Activated naive CD8-positive, alpha-beta T cell treated with anti-CD3 and anti-CD28 coated beads, Interleukin-2, amount 10 ng/mL, durations not matched to agents 7 days and 5 days (primary cell): ENCODE measurements at regions of chr6 and their contacts with region 1.

Region 1: DNA sequence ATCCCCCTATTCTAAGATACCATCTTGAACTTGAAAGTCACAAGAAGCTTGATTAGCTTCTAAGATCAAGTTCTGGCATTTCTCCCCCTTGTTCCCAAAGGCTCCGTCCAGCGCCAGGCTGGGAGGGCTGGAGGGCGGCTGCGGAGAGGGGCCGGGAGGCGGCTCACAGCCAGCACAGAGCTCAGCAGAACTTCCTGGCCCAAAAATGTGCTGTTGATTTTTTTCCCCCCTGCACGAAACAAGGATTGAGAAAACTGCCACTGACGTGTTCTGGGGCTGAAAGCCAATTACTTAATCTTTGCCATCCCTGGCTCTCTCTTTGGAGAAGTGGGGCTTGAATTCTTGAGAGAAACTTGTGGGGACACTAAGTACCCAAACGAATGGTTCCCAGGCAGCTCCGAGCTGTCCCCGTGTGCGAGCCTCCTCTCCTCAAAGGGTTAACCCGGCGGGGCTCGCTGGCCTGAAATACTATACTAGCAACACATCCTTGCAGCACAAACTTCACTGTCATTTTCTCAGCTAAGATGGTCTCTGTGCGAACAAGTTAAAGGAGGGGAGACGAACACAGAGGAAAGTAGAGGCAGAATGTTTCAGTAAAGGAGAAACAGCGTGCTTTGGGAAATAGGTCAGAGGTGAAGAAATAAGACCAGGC is 452 bp downstream of the TRAF3IP2 start:
- DNase-seq: peak; percentile 37
- ATAC-seq: peak; percentile 53
- H3K4me3 Mint-ChIP-seq: peak overlapping the region; percentile 88
- H3K27ac Mint-ChIP-seq: peak overlapping the region; percentile 91
- H3K4me1 Mint-ChIP-seq: peaks cover 27% of the 10 kb centered on the region
- H3K27me3 Mint-ChIP-seq: no peaks in the 10 kb centered on the region

Region 2: GRCh38 chr6:110930781-110931180 is 674.4 kb before region 1 on chr6:
- POLR2A ChIA-PET with region 1: no interaction called
- DNase-seq: no peak
- ATAC-seq: no peak
- H3K4me3 Mint-ChIP-seq: no peak overlapping the region
- H3K27ac Mint-ChIP-seq: no peak overlapping the region
- H3K4me1 Mint-ChIP-seq: peaks cover 6% of the 10 kb centered on the region
- H3K27me3 Mint-ChIP-seq: no peaks in the 10 kb centered on the region

Region 3: DNA sequence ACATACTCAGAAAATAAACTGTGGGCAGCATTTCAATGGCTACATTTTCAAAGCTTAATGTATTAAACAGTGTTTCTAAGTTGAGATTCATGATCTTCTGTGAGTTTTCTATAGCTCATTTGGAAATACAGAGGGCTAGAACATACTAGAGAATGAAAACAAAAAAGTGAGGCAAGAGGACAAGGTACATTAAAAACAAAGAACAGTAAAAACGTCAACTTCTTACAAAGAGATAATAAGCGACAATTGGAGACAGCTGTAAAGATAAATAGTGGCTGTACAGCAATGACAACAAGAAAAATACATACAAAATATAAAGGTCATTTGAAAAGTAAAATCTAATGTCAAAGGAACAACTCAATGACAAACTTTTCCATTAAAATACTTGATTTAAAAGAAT is 216.5 kb before region 1 on chr6:
- POLR2A ChIA-PET with region 1: no interaction called
- DNase-seq: no peak
- ATAC-seq: no peak
- H3K4me3 Mint-ChIP-seq: no peak overlapping the region
- H3K27ac Mint-ChIP-seq: no peak overlapping the region
- H3K4me1 Mint-ChIP-seq: no peaks in the 10 kb centered on the region
- H3K27me3 Mint-ChIP-seq: no peaks in the 10 kb centered on the region

Region 4: GRCh38 chr6:111483736-111484632 is 121.2 kb before region 1 on chr6:
- POLR2A ChIA-PET with region 1: interaction called, 25 read pairs
- DNase-seq: no peak
- ATAC-seq: peak; percentile 60
- H3K4me3 Mint-ChIP-seq: peak overlapping the region; percentile 96
- H3K27ac Mint-ChIP-seq: peak overlapping the region; percentile 100
- H3K4me1 Mint-ChIP-seq: peaks cover 44% of the 10 kb centered on the region
- H3K27me3 Mint-ChIP-seq: no peaks in the 10 kb centered on the region

Region 5: DNA sequence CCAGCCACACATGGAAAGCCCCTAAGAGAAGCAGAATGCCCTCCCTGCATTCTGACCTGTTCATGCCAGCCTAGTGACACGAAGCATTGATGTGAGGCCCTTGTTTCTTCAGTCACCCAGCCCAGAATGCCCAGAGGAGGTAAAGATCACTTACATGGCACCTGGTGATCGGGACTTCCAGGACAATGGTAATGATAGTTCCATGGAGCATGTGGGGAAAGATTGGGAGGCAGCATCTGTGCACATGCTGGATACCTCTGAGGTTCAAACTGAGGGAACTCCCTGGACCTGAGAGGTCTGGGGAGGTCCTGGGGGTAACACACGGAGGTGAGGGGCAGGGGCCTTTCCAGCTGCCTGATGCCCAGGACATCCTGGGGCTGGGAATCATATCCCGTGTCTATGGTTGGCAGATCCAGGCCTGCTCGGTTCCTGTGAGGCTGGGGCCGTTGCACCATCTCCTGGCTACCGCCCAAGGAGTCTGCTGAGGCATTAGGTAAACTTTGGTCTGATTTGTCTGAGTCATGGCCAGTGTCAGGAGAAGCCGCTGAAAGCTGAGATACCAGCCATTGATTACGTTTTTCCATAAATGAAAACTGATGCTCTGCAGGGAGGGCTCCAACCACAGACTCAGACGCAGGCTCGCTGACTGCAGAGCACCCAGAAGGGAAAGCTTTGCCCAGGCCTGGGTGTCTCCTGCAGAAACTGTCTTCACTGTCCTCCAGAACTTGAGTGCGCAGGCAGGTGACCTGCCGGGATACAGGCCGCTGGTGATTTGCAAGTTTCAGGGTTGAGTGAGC is 13.9 kb before region 1 on chr6:
- POLR2A ChIA-PET with region 1: no interaction called
- DNase-seq: no peak
- ATAC-seq: no peak
- H3K4me3 Mint-ChIP-seq: no peak overlapping the region
- H3K27ac Mint-ChIP-seq: no peak overlapping the region
- H3K4me1 Mint-ChIP-seq: peaks cover 14% of the 10 kb centered on the region
- H3K27me3 Mint-ChIP-seq: no peaks in the 10 kb centered on the region

Region 6: GRCh38 chr6:111680015-111680712 is 74.9 kb after region 1 on chr6:
- POLR2A ChIA-PET with region 1: no interaction called
- DNase-seq: no peak
- ATAC-seq: no peak
- H3K4me3 Mint-ChIP-seq: no peak overlapping the region
- H3K27ac Mint-ChIP-seq: no peak overlapping the region
- H3K4me1 Mint-ChIP-seq: peaks cover 15% of the 10 kb centered on the region
- H3K27me3 Mint-ChIP-seq: no peaks in the 10 kb centered on the region